CD4-positive, alpha-beta T cell (primary cell): ENCODE measurements at regions of chr4 and their contacts with region 1.

Region 1: DNA sequence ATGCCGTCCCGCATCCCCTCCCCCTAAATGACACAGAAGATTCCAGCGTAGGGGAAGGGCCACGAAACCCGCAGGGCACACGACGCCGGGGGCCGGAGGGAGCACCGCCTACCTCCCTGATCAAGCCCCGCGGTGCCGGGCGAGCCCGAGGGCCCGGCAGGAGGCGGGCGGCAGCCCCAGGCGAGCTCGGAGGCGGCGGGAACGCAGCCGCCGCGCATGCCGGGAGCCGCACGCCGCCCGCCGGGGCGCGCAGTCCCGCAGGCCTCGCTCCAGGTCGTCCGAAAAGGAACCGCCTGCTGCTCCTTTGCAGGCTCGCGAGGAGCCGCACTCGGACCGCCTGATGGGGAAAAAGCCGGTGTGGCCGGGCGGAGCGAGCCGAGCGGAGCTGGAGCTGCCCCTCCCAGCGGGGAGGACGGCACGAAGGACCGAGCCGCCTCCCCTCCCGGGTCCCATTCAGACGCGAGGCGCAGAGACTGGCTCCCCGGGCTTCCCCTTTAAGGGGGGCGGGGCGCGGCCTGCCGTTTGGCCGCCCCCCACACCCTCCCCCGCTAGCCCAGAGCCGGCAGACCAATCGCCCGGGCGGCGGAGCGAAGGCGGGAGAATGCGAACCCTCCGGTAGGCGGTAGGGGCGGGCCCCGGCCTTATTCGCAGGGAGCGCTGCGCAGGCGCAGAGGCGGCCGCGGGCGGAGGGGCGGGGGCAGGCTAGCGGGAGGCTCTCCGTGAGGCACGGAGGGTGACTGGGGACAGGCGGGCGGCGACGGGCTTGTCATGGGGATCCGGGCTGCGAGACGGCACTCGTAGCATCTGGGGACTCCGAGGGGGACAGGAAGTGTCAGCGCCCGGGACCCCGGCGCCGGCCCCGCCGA is 561 bp upstream of the ING2 start:
- DNase-seq: peak; percentile 98 to 100 (median 99)
- ATAC-seq: peak; percentile 77
- H3K4me3 ChIP-seq: peak overlapping the region; percentile 90
- H3K4me3 Mint-ChIP-seq: peak overlapping the region; percentile 100
- H3K27ac ChIP-seq: peak overlapping the region; percentile 87 to 94
- H3K27ac Mint-ChIP-seq: peak overlapping the region; percentile 97
- H3K4me1 ChIP-seq: peaks cover 14% of the 10 kb centered on the region
- H3K4me1 Mint-ChIP-seq: peaks cover 46% of the 10 kb centered on the region
- H3K27me3 ChIP-seq: no peaks in the 10 kb centered on the region
- H3K27me3 Mint-ChIP-seq: no peaks in the 10 kb centered on the region
- CTCF ChIP-seq: peak; percentile 8

Region 2: DNA sequence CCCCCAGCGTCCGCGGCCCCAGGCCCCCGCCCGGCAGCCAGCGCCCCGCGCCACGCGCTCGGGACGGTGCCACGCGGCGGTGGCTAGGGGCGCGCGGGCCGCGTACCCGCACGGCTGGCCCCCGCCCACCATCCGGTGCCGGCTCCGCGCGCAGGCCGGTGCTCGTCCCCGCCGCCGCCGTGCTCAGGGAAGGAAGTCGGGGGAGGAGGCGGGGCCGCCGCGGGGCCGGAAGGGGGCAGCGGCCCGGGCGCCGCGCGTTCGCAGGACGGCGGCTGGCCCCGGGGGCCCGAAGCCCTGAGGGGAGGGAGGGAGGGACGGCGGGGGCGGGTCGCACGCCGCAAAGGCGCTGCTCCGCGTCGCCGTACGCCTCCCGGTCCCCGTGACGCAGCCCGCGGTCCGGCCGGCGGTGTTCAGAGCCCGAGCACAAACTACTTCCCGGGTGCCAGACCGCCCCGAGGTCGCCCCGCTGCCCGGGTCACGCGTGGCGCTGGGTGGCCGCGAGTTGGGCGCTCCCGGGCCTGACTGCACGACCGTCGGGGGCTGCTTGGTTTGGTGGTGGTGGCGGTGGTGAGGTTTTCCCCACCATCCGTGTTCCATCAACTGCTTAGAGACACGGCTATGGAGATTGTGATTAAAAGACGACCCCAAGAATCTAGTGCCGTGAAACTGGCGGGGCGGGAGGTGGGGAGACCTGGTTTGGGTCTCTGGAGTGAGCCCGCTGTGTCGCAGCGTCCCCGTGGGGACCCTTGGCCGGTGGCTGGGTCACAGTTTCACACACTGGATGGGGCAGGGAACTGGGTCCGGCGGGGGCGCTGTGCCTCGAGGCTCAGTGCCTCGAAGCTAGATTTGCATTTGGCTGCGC is 586.9 kb before region 1 on chr4 and contains the start of gene DCTD:
- CTCF ChIA-PET with region 1: no interaction called
- POLR2A ChIA-PET with region 1: interaction called, 7 read pairs
- intact Hi-C with region 1: loop called (anchors 5 kb)
- DNase-seq: peak; percentile 54 to 90 (median 78)
- ATAC-seq: peak; percentile 78
- H3K4me3 ChIP-seq: peak within 1 kb of the TSS; percentile 85
- H3K4me3 Mint-ChIP-seq: peak within 1 kb of the TSS; percentile 93
- H3K27ac ChIP-seq: peak within 1 kb of the TSS; percentile 89 to 96
- H3K27ac Mint-ChIP-seq: peak within 1 kb of the TSS; percentile 89
- H3K4me1 ChIP-seq: peaks cover 42% of the 10 kb centered on the region
- H3K4me1 Mint-ChIP-seq: peaks cover 48% of the 10 kb centered on the region
- H3K27me3 ChIP-seq: no peaks in the 10 kb centered on the region
- H3K27me3 Mint-ChIP-seq: no peaks in the 10 kb centered on the region
- CTCF ChIP-seq: peak; percentile 42
- total RNA-seq, gene DCTD: 49.4 to 54.3 TPM

Region 3: DNA sequence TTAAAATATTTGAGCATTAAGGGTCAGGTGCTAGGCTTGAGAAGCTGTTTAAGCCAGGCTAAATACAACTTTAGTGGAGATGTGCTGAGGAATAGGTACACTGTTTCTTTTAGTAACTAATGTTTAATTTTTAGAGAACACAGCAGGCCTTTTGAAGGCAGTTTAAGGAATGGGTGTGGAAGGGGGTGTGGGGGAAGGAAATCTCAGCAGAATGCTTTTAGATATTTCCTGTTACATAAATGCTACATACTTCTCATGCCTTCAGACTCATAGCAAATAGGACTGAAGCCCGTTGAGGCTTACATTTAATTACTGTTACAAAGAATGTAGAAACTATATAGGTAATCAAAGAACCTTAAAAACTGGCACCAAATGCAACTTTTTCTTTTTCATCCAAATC is 338.9 kb before region 1 on chr4:
- CTCF ChIA-PET with region 1: no interaction called
- POLR2A ChIA-PET with region 1: no interaction called
- intact Hi-C with region 1: no loop called
- DNase-seq: no peak
- ATAC-seq: no peak
- H3K4me3 ChIP-seq: no peak overlapping the region
- H3K4me3 Mint-ChIP-seq: no peak overlapping the region
- H3K27ac ChIP-seq: no peak overlapping the region
- H3K27ac Mint-ChIP-seq: no peak overlapping the region
- H3K4me1 ChIP-seq: no peaks in the 10 kb centered on the region
- H3K4me1 Mint-ChIP-seq: peaks cover 10% of the 10 kb centered on the region
- H3K27me3 ChIP-seq: no peaks in the 10 kb centered on the region
- H3K27me3 Mint-ChIP-seq: no peaks in the 10 kb centered on the region
- CTCF ChIP-seq: no peak

Region 4: DNA sequence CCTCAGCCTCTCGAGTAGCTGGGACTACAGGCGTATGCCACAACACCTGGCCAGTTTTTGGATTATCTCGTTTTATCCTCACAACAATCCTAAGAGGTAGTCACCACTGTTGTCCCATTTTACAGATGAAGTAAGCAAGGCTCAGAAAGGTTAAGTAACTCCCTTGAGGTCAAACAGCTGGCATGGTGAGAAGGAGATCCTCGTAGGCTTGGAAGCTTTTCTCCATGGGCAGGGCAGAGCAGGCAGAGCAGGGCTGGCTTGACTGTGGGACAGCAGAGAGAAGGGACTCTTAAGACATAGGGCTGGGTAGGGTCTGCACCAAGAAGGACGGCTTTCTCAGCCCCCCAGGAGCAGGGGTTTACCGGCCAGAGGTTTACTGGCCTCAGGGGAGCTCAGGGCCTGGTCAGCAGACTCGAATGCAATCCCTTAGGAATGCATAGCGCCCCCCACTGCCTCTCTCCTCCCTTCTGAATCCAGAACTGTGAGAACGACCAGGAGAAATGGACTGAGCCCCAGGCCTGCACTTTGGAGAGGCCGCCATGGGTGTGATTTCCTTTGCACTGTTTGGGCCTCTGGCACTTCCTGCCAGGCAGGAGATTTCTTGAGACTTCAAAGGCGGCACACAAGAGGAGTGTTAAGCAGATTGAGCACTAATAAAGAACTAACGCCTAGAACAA is 73.8 kb before region 1 on chr4:
- CTCF ChIA-PET with region 1: no interaction called
- POLR2A ChIA-PET with region 1: interaction called, 18 read pairs
- intact Hi-C with region 1: no loop called
- DNase-seq: peak in 12 of 14 experiments; percentile 10 to 63 (median 34)
- ATAC-seq: peak; percentile 93
- H3K4me3 ChIP-seq: no peak overlapping the region
- H3K4me3 Mint-ChIP-seq: peak overlapping the region; percentile 72
- H3K27ac ChIP-seq: peak overlapping the region in 1 of 2 donors; percentile 59
- H3K27ac Mint-ChIP-seq: peak overlapping the region; percentile 81
- H3K4me1 ChIP-seq: peaks cover 38% of the 10 kb centered on the region
- H3K4me1 Mint-ChIP-seq: peaks cover 42% of the 10 kb centered on the region
- H3K27me3 ChIP-seq: no peaks in the 10 kb centered on the region
- H3K27me3 Mint-ChIP-seq: no peaks in the 10 kb centered on the region
- CTCF ChIP-seq: no peak

Region 5: GRCh38 chr4:183444214-183445066 is 59.9 kb before region 1 on chr4 and contains the start of gene CDKN2AIP:
- CTCF ChIA-PET with region 1: interaction called, 8 read pairs
- POLR2A ChIA-PET with region 1: interaction called, 107 read pairs
- intact Hi-C with region 1: loop called (anchors 1 to 2 kb)
- DNase-seq: peak; percentile 89 to 98 (median 94)
- ATAC-seq: peak; percentile 82
- H3K4me3 ChIP-seq: peak within 1 kb of the TSS; percentile 94
- H3K4me3 Mint-ChIP-seq: peak within 1 kb of the TSS; percentile 98
- H3K27ac ChIP-seq: peak within 1 kb of the TSS; percentile 91
- H3K27ac Mint-ChIP-seq: peak within 1 kb of the TSS; percentile 96
- H3K4me1 ChIP-seq: peaks cover 26% of the 10 kb centered on the region
- H3K4me1 Mint-ChIP-seq: peaks cover 55% of the 10 kb centered on the region
- H3K27me3 ChIP-seq: no peaks in the 10 kb centered on the region
- H3K27me3 Mint-ChIP-seq: no peaks in the 10 kb centered on the region
- CTCF ChIP-seq: no peak
- total RNA-seq, gene CDKN2AIP: 55.7 to 56.9 TPM

Region 6: DNA sequence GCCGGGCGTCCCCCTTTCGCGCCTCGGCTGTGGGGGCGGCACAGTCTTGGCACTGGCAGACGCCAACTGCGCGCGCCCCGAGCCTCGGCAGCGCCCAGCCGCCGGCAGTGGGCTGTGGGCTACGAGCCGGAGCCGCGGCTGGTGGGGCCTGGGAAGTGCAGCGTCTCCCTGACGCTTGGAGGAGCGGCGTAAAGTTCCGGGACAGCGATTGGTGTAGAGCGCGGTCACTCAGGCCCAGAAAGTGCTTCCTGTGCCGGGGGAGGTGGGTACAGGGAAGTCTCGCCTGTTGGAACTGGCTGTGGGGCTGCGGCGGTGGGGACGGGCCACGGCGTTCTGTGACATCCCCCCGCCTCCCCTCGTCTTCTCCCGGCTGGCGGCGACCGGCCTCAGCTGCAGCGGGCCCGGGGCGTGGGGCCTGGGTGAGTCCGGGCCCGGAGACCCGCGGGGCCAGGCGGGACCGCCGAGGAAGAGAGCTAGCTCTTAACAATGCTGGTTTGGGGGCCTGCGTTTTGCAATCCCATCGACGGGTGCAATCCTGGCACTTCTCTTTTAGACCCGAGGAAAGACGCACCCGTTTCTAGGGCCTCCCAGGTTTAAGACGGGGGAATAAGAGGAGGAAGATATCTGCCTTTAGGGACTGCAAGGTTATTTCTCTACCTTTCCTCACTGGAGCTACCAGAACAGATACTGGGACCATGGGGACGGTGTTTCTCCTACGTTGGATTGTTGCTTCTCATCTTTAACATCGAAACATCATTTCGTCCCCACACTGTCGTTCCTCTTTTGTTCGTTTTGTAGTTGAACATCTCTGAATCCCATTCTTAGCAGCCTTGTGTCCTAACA is 155.0 kb after region 1 on chr4 and contains the starts of genes RWDD4 and TRAPPC11:
- CTCF ChIA-PET with region 1: no interaction called
- POLR2A ChIA-PET with region 1: interaction called, 14 read pairs
- intact Hi-C with region 1: loop called (anchors 1 to 2 kb)
- DNase-seq: peak; percentile 92 to 99 (median 94)
- ATAC-seq: peak; percentile 99
- H3K4me3 ChIP-seq: peak within 1 kb of the TSS; percentile 81
- H3K4me3 Mint-ChIP-seq: peak within 1 kb of the TSS; percentile 94
- H3K27ac ChIP-seq: peak within 1 kb of the TSS; percentile 74 to 79
- H3K27ac Mint-ChIP-seq: peak within 1 kb of the TSS; percentile 93
- H3K4me1 ChIP-seq: peaks cover 24% of the 10 kb centered on the region
- H3K4me1 Mint-ChIP-seq: peaks cover 56% of the 10 kb centered on the region
- H3K27me3 ChIP-seq: no peaks in the 10 kb centered on the region
- H3K27me3 Mint-ChIP-seq: no peaks in the 10 kb centered on the region
- CTCF ChIP-seq: no peak
- total RNA-seq, gene RWDD4: 9.9 to 10.5 TPM
- total RNA-seq, gene TRAPPC11: 14.7 to 19.2 TPM

Region 7: GRCh38 chr4:184733654-184734524 is 1229.6 kb after region 1 on chr4 and contains the start of gene CENPU:
- CTCF ChIA-PET with region 1: no interaction called
- POLR2A ChIA-PET with region 1: no interaction called
- intact Hi-C with region 1: loop called in 1 of 2 experiments (anchors 10 kb)
- DNase-seq: peak; percentile 91 to 98 (median 93)
- ATAC-seq: peak; percentile 97
- H3K4me3 ChIP-seq: peak within 1 kb of the TSS; percentile 87
- H3K4me3 Mint-ChIP-seq: peak within 1 kb of the TSS; percentile 93
- H3K27ac ChIP-seq: no peak within 1 kb of the TSS
- H3K27ac Mint-ChIP-seq: peak within 1 kb of the TSS; percentile 74
- H3K4me1 ChIP-seq: peaks cover 13% of the 10 kb centered on the region
- H3K4me1 Mint-ChIP-seq: peaks cover 17% of the 10 kb centered on the region
- H3K27me3 ChIP-seq: no peaks in the 10 kb centered on the region
- H3K27me3 Mint-ChIP-seq: no peaks in the 10 kb centered on the region
- CTCF ChIP-seq: no peak
- total RNA-seq, gene CENPU: 1.9 to 2.8 TPM

Region 8: DNA sequence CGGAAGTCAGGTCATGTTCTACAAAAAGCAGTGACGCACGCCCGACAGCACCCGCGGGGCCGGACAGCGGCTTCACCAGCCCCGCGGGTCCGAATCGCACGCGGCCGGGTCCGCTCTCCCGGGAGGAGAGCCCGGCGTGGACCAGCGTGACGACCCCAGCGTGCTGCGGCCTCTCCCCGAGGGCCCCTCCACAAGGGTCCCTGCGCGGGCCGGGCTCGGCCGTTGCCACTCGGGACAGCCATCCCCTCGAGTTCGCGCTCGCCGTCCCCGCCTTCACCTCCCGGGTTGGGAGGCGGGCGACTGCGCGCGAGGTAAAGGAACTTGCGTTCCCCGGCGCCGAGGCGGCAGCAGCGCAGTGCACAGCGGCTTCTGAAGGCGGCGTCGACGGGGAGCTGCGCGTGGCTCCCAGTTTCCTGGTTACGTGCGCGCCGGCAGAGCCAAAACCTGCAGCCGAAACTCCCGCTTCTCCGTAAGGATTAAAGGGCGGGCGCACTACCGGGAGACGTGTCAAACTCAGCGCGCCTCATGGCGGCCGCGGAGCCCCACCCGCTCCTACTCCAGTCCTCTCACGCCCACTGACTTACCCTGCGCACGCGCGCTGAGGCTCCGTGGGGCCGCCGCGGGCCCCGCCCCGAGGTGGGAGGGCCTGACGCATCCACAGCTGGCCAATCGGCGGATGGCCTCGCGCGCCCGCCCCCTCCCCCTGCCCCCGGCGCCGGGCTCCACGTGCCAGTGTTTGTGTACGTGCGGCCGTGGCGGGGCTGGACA is 1891.8 kb after region 1 on chr4:
- CTCF ChIA-PET with region 1: interaction called, 4 read pairs
- POLR2A ChIA-PET with region 1: interaction called, 3 read pairs
- intact Hi-C with region 1: loop called in 1 of 2 experiments (anchors 10 kb)
- DNase-seq: peak; percentile 88 to 98 (median 96)
- ATAC-seq: peak; percentile 91
- H3K4me3 ChIP-seq: peak overlapping the region; percentile 88
- H3K4me3 Mint-ChIP-seq: peak overlapping the region; percentile 92
- H3K27ac ChIP-seq: peak overlapping the region; percentile 93 to 97
- H3K27ac Mint-ChIP-seq: peak overlapping the region; percentile 92
- H3K4me1 ChIP-seq: peaks cover 11% of the 10 kb centered on the region
- H3K4me1 Mint-ChIP-seq: peaks cover 17% of the 10 kb centered on the region
- H3K27me3 ChIP-seq: no peaks in the 10 kb centered on the region
- H3K27me3 Mint-ChIP-seq: no peaks in the 10 kb centered on the region
- CTCF ChIP-seq: no peak